ENCODE measurements at regions of chr14 and their contacts with region 1.

Region 1: DNA sequence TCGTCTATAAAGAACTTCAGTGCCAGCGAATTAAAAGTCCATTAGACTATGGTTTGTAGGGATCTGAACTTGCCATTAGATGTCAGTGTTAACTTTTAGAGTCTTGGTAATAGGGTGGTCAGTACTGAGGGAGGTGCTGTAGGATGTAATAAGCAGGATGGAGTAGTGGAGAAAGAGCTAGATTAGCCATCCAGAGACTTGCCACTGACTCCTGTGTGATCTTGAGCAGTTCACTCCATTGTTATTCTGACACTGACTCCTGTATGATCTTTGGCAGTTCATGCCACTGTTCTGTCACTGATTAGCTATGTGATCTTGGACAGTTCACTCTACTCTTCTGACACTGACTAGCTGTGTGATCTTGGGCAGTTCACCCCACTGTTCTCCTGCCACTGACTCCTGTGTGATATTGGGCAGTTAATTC is 133.6 kb downstream of the TTLL5 start:
- DNase-seq: peak; percentile 33
- H3K4me3 ChIP-seq: no peak overlapping the region
- H3K27ac ChIP-seq: no peak overlapping the region
- H3K27me3 ChIP-seq: no peaks in the 10 kb centered on the region
- CTCF ChIP-seq: peak; percentile 68

Region 2: GRCh38 chr14:74893614-74894091 is 901.0 kb before region 1 on chr14:
- CTCF ChIA-PET with region 1: no interaction called
- POLR2A ChIA-PET with region 1: no interaction called
- DNase-seq: no peak
- H3K4me3 ChIP-seq: no peak overlapping the region
- H3K27ac ChIP-seq: no peak overlapping the region
- H3K27me3 ChIP-seq: no peaks in the 10 kb centered on the region
- CTCF ChIP-seq: no peak

Region 3: DNA sequence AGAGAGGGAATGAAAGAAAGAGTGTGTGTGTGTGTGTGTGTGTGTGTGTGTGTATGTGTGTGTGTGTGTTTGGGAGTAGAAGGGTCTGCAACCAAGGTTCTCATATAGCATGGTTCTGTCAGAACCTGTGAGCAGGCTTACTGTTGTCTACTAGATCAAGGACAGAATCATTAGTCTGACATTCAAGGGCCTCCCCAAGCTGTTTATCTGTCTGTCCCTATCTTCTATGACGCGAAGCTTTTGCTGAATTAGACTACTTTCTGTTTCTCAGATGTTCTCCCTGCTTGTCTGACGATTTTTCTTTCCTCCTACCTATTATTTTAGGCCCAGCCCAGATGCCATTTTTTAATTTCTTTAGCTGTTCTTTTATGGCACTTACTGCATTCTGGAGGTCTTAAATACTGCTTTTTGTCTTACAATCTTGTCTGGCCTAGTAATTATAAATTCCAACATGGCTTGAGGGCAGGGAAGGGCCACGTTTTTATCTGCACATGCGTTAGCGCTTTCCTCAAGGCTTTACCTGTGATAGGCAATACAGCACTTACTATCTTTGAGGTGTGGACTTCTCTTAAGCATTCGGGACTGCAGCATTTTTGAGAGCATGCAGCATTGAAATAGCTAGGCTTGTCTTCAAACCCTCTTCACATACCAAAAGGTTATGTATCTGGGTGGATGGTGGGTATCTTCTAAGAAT is 16.7 kb after region 1 on chr14:
- CTCF ChIA-PET with region 1: no interaction called
- POLR2A ChIA-PET with region 1: no interaction called
- DNase-seq: no peak
- H3K4me3 ChIP-seq: no peak overlapping the region
- H3K27ac ChIP-seq: no peak overlapping the region
- H3K27me3 ChIP-seq: no peaks in the 10 kb centered on the region
- CTCF ChIP-seq: no peak

Region 4: GRCh38 chr14:75822522-75823141 is 28.0 kb after region 1 on chr14:
- CTCF ChIA-PET with region 1: interaction called, 18 read pairs
- POLR2A ChIA-PET with region 1: no interaction called
- DNase-seq: peak; percentile 46
- H3K4me3 ChIP-seq: no peak overlapping the region
- H3K27ac ChIP-seq: peak overlapping the region; percentile 59
- H3K27me3 ChIP-seq: no peaks in the 10 kb centered on the region
- CTCF ChIP-seq: no peak

Region 5: GRCh38 chr14:75884198-75884611 is 89.6 kb after region 1 on chr14:
- CTCF ChIA-PET with region 1: interaction called, 16 read pairs
- POLR2A ChIA-PET with region 1: no interaction called
- DNase-seq: peak; percentile 60
- H3K4me3 ChIP-seq: no peak overlapping the region
- H3K27ac ChIP-seq: no peak overlapping the region
- H3K27me3 ChIP-seq: no peaks in the 10 kb centered on the region
- CTCF ChIP-seq: peak; percentile 40

Region 6: DNA sequence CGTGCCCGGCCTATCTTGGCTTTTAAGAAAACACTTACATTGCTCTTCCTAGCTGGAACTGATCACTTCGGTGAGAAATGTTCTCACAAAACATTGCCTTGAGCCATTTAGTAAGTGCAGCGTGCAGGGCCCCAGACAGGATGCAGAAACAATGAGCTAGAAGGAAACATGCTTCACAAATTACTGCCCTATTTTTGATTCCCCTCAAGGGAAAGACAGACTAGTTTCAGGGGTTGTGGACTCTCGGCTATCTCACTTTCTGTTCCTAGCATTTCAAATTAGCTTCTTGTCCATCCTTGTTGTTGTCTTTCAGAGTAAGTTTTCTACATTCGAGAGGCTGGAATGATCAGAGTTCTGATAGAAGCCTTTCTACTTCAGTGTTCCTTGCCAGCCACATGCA is 165.6 kb after region 1 on chr14:
- CTCF ChIA-PET with region 1: no interaction called
- POLR2A ChIA-PET with region 1: no interaction called
- DNase-seq: no peak
- H3K4me3 ChIP-seq: no peak overlapping the region
- H3K27ac ChIP-seq: no peak overlapping the region
- H3K27me3 ChIP-seq: no peaks in the 10 kb centered on the region
- CTCF ChIP-seq: no peak

Region 7: DNA sequence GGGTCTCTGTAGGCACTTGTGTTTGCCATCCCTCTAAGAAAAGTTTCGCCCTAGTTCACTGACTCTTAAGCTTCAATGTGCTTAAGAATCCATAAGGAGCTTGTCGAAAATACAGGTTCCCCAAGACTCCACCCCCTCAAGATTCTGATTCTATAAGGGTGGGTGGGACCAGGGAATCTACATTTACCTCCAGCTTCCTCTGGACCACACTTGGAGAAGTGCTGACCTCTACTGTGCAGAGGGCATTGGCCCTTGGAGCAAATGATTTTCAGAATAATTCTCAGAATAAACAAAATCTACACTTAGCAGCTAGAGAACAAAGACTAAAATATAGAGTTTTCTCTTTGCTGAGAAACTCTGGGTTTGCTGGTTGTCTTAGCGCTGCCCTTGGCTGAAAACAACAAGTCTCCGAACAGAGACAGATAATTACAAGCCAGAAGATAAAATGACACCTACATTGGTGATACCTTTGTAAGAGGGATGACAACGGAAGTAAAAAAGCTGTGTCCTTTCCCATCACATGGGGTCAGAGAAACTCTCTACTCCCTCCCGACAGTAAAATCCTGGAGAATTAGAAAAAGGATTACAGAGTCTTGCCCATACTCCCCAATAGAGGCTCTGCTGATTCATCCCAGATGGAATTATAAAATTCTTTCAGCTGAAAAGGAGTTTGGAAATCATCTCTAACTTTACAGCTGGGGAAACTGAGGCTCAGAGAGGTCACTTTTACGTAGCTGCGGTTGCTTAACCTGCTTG is 182.4 kb after region 1 on chr14:
- CTCF ChIA-PET with region 1: interaction called, 105 read pairs
- POLR2A ChIA-PET with region 1: interaction called, 16 read pairs
- DNase-seq: no peak
- H3K4me3 ChIP-seq: no peak overlapping the region
- H3K27ac ChIP-seq: no peak overlapping the region
- H3K27me3 ChIP-seq: no peaks in the 10 kb centered on the region
- CTCF ChIP-seq: no peak

Measured in AG04450 (cell line).